ENCODE measurements at regions of chr2 and their contacts with region 1.

Region 1: GRCh38 chr2:84919885-84920580 is 14.6 kb downstream of the TMSB10 start:
- DNase-seq: peak; percentile 94
- H3K4me3 ChIP-seq: peak overlapping the region; percentile 26
- H3K27ac ChIP-seq: peak overlapping the region; percentile 93
- H3K4me1 ChIP-seq: peaks cover 24% of the 10 kb centered on the region
- H3K27me3 ChIP-seq: no peaks in the 10 kb centered on the region
- CTCF ChIP-seq: no peak

Region 2: DNA sequence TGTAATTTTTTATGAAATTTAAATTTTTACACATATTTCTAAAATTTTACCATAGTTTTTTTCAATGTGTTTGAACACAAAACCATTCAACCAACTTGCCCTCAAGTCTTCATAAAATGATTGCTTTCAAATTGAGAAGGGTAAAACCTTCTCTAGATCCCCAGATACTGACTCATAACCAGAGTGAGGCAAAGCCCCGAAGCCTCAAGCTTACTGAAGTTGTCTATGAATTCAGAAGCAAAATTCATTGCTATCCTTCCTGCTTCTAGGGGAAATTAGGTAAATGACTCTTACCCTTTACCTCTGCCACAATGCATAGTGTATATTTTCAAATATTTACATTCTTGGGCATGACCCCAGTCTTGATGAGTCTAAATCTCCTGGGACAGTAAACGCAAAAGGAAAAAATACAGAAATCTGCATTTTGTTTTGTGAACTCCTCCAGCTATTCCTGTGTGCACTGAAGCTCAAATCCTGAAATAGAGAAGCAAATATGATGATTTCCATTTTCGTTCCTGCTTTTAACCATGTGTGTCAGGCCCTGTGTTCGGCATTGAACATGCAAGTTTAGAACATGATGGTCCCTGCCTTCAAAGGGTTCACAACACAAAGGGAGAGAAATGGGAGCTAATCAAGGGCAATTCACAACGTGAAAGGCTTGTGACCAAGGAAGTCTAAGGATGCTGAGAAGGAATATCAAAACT is 707.3 kb before region 1 on chr2:
- CTCF ChIA-PET with region 1: no interaction called
- POLR2A ChIA-PET with region 1: no interaction called
- intact Hi-C with region 1: no loop called
- DNase-seq: no peak
- H3K4me3 ChIP-seq: no peak overlapping the region
- H3K27ac ChIP-seq: no peak overlapping the region
- H3K4me1 ChIP-seq: no peaks in the 10 kb centered on the region
- H3K27me3 ChIP-seq: no peaks in the 10 kb centered on the region
- CTCF ChIP-seq: no peak

Region 3: GRCh38 chr2:84991404-84992151 is 71.5 kb after region 1 on chr2:
- CTCF ChIA-PET with region 1: no interaction called
- POLR2A ChIA-PET with region 1: no interaction called
- intact Hi-C with region 1: no loop called
- DNase-seq: no peak
- H3K4me3 ChIP-seq: no peak overlapping the region
- H3K27ac ChIP-seq: no peak overlapping the region
- H3K4me1 ChIP-seq: peaks cover 3% of the 10 kb centered on the region
- H3K27me3 ChIP-seq: no peaks in the 10 kb centered on the region
- CTCF ChIP-seq: no peak

Region 4: DNA sequence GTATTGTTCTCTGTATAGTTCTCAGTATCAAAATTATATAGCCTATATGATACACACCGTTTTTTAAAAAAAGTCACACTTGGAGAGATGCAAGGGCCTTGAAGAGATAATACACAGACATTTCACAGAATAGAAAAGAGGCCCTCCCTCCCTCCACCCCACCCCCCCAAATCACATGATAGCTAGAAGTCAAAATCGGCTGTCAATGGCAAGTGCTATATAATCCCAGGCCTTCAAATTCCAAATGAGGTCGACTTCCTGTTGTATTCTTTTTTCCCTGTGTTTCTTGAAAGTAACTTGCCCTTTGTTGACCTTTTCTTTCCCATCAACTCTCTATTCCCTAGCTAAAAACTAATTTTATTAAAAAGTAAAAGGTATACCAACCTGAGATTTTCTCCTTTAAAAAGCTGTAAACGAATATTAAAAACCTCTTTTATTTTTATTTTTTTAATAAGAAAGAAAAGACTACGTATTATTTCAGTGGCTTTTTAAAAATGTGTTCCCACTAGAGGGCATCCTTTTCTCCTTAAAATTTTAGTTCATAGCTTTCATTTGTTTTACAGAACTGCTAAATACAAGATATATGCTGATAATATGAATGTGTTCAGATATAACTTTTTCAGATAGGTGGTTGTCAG is 97.5 kb after region 1 on chr2:
- CTCF ChIA-PET with region 1: interaction called, 16 read pairs
- POLR2A ChIA-PET with region 1: no interaction called
- intact Hi-C with region 1: no loop called
- DNase-seq: peak; percentile 75
- H3K4me3 ChIP-seq: no peak overlapping the region
- H3K27ac ChIP-seq: peak overlapping the region; percentile 0
- H3K4me1 ChIP-seq: peaks cover 55% of the 10 kb centered on the region
- H3K27me3 ChIP-seq: no peaks in the 10 kb centered on the region
- CTCF ChIP-seq: peak; percentile 75

Measured in A673 (cell line).